Activated CD4-positive, alpha-beta T cell treated with anti-CD3 and anti-CD28 coated beads for 36 hours (primary cell): ENCODE measurements at regions of chr11 and their contacts with region 1.

Region 1: GRCh38 chr11:73404048-73404447 is 27.8 kb downstream of the RELT start:
- DNase-seq: peak; percentile 7
- ATAC-seq: no peak
- H3K4me3 Mint-ChIP-seq: no peak overlapping the region
- H3K27ac Mint-ChIP-seq: no peak overlapping the region
- H3K4me1 Mint-ChIP-seq: peaks cover 3% of the 10 kb centered on the region
- H3K27me3 Mint-ChIP-seq: no peaks in the 10 kb centered on the region

Region 2: DNA sequence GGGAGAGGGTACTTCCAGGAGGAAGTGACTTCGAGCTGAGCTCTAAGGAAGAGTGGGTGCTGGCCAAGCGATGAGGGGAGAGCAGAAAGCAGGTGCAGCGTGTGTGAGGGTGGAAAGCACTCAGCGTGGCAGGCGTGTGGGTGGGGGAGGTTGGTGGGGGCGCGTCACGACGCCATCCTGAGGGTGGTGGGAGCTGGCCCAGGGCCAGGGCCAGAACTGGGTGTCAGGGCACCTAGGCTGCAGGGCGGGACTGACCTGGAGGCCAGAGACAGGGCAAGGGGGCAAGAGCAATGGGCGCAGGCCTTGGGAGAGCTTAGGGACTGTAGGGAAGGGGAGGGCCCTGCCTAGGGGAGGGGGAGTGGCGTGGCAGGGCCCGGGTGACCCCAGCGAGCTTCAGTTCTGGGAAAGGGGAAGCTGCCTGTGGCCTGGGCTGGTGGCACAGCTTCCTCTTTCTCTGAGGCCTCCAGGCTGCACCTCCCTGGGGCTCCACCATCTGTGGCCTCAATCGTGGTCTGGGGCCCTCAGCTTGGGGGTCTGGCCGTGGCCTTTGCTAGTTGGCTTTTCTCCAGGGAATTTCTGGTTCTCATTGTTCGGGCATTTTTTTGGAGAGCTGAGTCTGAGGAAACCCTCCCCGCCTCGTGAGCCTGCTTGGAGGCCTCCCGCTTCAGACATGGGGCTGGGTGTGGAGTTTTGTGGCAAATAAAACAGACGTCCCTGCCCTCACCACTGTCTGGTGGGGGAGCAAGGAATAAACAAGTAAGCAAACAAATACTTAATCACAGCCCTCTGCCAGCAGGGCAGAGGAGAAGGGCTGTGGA is 19.0 kb before region 1 on chr11:
- CTCF ChIA-PET with region 1: interaction called, 12 read pairs
- POLR2A ChIA-PET with region 1: no interaction called
- intact Hi-C with region 1: no loop called
- DNase-seq: peak; percentile 56
- ATAC-seq: peak; percentile 76
- H3K4me3 Mint-ChIP-seq: no peak overlapping the region
- H3K27ac Mint-ChIP-seq: peak overlapping the region; percentile 65
- H3K4me1 Mint-ChIP-seq: peaks cover 52% of the 10 kb centered on the region
- H3K27me3 Mint-ChIP-seq: no peaks in the 10 kb centered on the region

Region 3: GRCh38 chr11:73612601-73613140 is 208.6 kb after region 1 on chr11:
- CTCF ChIA-PET with region 1: interaction called, 3 read pairs
- POLR2A ChIA-PET with region 1: no interaction called
- intact Hi-C with region 1: loop called in 1 of 2 experiments (anchors 5 kb)
- DNase-seq: no peak
- ATAC-seq: no peak
- H3K4me3 Mint-ChIP-seq: no peak overlapping the region
- H3K27ac Mint-ChIP-seq: no peak overlapping the region
- H3K4me1 Mint-ChIP-seq: no peaks in the 10 kb centered on the region
- H3K27me3 Mint-ChIP-seq: peaks cover 5% of the 10 kb centered on the region

Region 4: DNA sequence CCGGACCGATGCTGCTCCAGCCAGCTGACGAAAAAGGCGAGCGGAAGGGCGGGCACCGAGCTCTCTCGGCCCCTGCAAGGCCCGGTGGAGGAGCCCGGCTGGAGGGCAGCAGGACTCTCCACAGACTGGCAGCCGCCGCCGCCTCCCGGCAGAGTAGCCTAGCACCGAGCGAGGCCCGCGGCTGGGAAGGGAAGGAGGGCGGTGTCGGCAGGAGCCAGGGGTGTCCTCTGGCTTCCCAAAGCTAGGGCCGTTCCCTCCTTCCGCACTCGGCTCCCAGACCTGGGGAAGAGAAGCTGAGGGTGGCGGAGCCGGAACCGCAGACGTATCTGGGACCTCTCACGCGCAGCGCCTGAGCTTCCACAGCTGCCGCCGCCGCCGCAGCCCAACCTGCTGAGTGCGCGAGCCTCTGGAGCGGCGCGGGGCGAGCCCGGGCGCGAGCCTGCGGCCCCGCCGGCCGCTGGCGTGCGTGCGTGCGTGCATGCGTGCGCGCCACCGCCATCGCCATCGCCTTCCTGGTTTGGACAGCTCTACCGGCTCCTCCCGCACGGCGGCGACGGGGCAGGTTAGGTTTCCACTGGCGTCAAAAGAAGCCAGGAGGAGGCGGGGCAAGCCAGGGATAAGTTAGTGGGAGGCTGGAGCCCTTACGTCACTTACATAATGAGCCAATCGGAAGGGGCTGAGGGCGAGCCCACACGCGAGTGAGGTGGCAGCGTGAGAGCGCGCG is 356.8 kb after region 1 on chr11 and contains the start of gene RAB6A:
- CTCF ChIA-PET with region 1: no interaction called
- POLR2A ChIA-PET with region 1: no interaction called
- intact Hi-C with region 1: no loop called
- DNase-seq: peak; percentile 100
- ATAC-seq: peak; percentile 93
- H3K4me3 Mint-ChIP-seq: peak within 1 kb of the TSS; percentile 97
- H3K27ac Mint-ChIP-seq: peak within 1 kb of the TSS; percentile 86
- H3K4me1 Mint-ChIP-seq: peaks cover 22% of the 10 kb centered on the region
- H3K27me3 Mint-ChIP-seq: no peaks in the 10 kb centered on the region
- total RNA-seq, gene RAB6A: 57.9 to 58.9 TPM